Lower leg skin (tissue), 4 donors: ENCODE measurements at regions of chr13 and their contacts with region 1.

Region 1: GRCh38 chr13:96822895-96823294 is 171.4 kb downstream of the OXGR1 start:
- DNase-seq: peak in 1 of 2 donors; percentile 52
- H3K4me3 ChIP-seq: no peak overlapping the region
- CTCF ChIP-seq: no peak
- POLR2A ChIP-seq: no peak

Region 2: GRCh38 chr13:98397221-98397620 is 1574.3 kb after region 1 on chr13:
- intact Hi-C with region 1: loop called (anchors 5 kb)
- DNase-seq: no peak
- H3K4me3 ChIP-seq: no peak overlapping the region
- CTCF ChIP-seq: no peak
- POLR2A ChIP-seq: no peak